Upper lobe of right lung (tissue), 1 donor: ENCODE measurements at regions of chr14 and their contacts with region 1.

Region 1: GRCh38 chr14:75307700-75308379 is 29.2 kb downstream of the FOS start:
- DNase-seq: peak; percentile 88
- ATAC-seq: peak; percentile 87
- H3K4me3 ChIP-seq: no peak overlapping the region
- H3K27ac ChIP-seq: no peak overlapping the region
- H3K4me1 ChIP-seq: peaks cover 16% of the 10 kb centered on the region
- H3K27me3 ChIP-seq: no peaks in the 10 kb centered on the region
- CTCF ChIP-seq: peak; percentile 90

Region 2: GRCh38 chr14:75138492-75138891 is 169.3 kb before region 1 on chr14:
- intact Hi-C with region 1: loop called (anchors 5 kb)
- DNase-seq: no peak
- ATAC-seq: peak; percentile 70
- H3K4me3 ChIP-seq: no peak overlapping the region
- H3K27ac ChIP-seq: peak overlapping the region; percentile 11
- H3K4me1 ChIP-seq: peaks cover 47% of the 10 kb centered on the region
- H3K27me3 ChIP-seq: no peaks in the 10 kb centered on the region
- CTCF ChIP-seq: no peak

Region 3: GRCh38 chr14:75430526-75430925 is 122.7 kb after region 1 on chr14:
- intact Hi-C with region 1: loop called (anchors 10 kb)
- DNase-seq: no peak
- ATAC-seq: no peak
- H3K4me3 ChIP-seq: peak overlapping the region; percentile 70
- H3K27ac ChIP-seq: peak overlapping the region; percentile 53
- H3K4me1 ChIP-seq: peaks cover 44% of the 10 kb centered on the region
- H3K27me3 ChIP-seq: no peaks in the 10 kb centered on the region
- CTCF ChIP-seq: no peak

Region 4: GRCh38 chr14:75499084-75499875 is 191.4 kb after region 1 on chr14:
- intact Hi-C with region 1: no loop called
- DNase-seq: no peak
- ATAC-seq: no peak
- H3K4me3 ChIP-seq: no peak overlapping the region
- H3K27ac ChIP-seq: no peak overlapping the region
- H3K4me1 ChIP-seq: no peaks in the 10 kb centered on the region
- H3K27me3 ChIP-seq: no peaks in the 10 kb centered on the region
- CTCF ChIP-seq: no peak